Activated naive CD4-positive, alpha-beta T cell treated with anti-CD3 and anti-CD28 coated beads for 36 hours (primary cell): ENCODE measurements at regions of chr3 and their contacts with region 1.

Region 1: DNA sequence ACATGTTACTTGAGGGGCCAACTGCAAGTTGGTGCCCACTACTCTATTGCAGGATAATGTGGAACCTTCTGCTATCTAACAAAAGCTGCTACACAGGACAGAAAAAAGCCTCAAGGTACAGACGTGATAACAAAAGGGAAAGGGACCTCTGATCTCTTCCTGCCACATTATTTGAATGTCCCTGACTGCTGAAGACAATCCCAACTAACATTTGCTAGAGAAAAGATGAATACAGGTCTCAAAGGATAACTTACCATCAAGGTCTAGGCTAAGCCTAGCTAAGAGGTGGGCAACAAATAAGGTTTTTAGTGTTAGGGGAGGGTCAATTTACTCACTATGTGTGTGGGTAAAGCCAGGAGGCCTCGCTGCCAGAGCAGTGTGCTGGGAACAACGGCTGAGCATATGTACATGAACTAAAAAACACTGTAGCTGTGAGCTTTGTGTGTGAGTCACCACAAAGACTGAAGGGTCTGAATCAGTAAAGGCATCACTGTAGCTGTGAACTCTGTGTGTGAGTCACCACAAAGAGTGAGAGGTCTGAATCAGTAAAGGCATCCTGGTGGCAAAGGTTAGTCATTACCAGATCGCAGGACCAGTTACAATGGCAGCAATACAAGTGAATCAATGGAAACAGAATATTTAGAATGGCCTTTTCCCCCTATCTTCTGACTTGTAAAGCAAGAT is 111.7 kb downstream of the LMLN start:
- DNase-seq: peak; percentile 80
- H3K4me3 Mint-ChIP-seq: peak overlapping the region; percentile 11
- H3K27ac Mint-ChIP-seq: peak overlapping the region; percentile 88
- H3K4me1 Mint-ChIP-seq: peaks cover 33% of the 10 kb centered on the region
- H3K27me3 Mint-ChIP-seq: peaks cover 6% of the 10 kb centered on the region

Region 2: DNA sequence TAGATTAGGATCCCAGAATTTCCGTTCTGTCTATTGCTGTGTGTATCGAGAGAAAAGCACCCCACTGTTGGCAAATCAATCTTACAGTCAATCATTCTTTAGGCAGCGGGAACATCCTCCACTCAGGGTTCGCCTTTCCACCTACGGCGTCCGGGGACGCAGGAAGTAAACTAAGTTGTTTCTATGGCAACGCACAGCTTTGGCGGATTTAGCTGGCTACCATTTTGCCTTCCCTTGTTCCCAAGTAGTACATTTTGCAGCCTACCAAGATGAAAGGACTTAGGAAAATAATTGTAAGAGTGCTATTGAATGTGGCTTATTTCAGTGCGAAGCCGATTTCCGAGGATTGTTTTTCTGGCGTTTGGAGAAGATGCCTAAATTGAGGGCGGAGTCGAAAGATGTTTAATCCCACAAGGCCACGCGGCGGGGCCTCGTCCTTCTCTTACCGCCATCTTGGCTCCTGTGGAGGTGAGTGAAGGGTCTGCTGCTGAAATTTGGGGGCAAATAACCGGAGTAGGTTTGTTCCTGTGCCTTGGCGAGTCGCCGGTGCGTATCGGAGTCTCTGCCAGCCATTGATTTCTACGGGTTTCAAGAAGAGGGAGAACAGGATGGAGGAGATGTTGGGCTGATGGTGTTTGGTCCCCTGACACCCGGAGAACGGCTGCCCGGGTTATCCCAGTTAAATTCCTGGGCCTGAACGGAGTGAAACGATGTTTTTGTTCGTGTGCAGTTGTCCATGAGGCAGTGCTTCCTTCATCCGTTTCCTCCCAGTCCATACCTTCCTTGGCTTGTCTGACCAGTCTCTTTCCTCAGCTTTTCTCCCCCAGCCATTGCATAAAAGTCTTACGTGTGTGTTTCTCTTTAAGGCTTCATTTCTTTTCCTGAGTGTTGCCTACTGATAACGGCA is 121.7 kb before region 1 on chr3 and contains the start of gene RPL35A:
- CTCF ChIA-PET with region 1: interaction called, 3 read pairs
- intact Hi-C with region 1: loop called (anchors 1 kb)
- DNase-seq: peak; percentile 88
- H3K4me3 Mint-ChIP-seq: peak within 1 kb of the TSS; percentile 94
- H3K27ac Mint-ChIP-seq: peak within 1 kb of the TSS; percentile 99
- H3K4me1 Mint-ChIP-seq: peaks cover 42% of the 10 kb centered on the region
- H3K27me3 Mint-ChIP-seq: no peaks in the 10 kb centered on the region
- total RNA-seq, gene RPL35A: 1,826 to 1,852 TPM

Region 3: GRCh38 chr3:197959898-197960693 is 111.6 kb before region 1 on chr3 and contains the start of gene LMLN:
- CTCF ChIA-PET with region 1: interaction called, 3 read pairs
- intact Hi-C with region 1: loop called (anchors 1 kb)
- DNase-seq: peak; percentile 95
- H3K4me3 Mint-ChIP-seq: peak within 1 kb of the TSS; percentile 85
- H3K27ac Mint-ChIP-seq: peak within 1 kb of the TSS; percentile 88
- H3K4me1 Mint-ChIP-seq: peaks cover 43% of the 10 kb centered on the region
- H3K27me3 Mint-ChIP-seq: no peaks in the 10 kb centered on the region
- total RNA-seq, gene LMLN: 2.1 to 2.2 TPM

Region 4: GRCh38 chr3:198113206-198114053 is 41.7 kb after region 1 on chr3:
- CTCF ChIA-PET with region 1: no interaction called
- intact Hi-C with region 1: loop called (anchors 5 kb)
- DNase-seq: no peak
- H3K4me3 Mint-ChIP-seq: peak overlapping the region; percentile 61
- H3K27ac Mint-ChIP-seq: no peak overlapping the region
- H3K4me1 Mint-ChIP-seq: peaks cover 13% of the 10 kb centered on the region
- H3K27me3 Mint-ChIP-seq: peaks cover 42% of the 10 kb centered on the region